GM10248 (cell line): ENCODE measurements at regions of chr1 and their contacts with region 1.

Region 1: DNA sequence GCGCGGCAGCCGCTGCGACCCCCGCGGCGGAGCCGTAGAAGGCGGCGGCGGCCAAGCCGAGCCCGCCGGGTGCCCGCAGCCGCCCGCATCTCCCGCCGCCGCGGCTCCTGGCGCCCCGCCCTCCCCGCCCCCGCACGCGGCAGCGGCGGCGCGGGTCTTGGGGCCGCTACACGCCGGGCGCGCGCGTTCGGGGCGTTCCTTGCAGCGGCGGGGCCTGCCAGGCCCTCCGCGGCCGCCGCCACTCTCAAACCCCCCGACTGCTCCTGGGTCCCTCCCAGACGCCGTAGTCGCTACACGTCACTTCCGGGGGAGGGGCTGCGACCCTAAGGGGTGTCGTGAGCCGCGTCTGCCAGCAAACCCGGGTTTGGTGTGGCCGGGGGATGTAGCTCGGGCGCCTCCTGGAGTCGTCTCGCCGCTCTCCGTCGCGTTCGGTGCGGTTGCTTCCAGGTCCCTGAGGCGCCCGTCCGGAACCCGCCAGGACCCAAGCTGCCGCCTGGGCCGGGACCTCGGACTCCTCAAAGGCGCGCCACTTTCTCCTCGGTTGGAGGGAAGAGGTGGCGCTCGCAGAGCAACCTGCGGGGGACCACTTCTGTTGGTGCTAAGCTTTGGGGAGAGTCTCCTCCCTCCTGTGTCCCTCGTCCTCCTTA is at the start of gene ELK4:
- DNase-seq: peak; percentile 97
- CTCF ChIP-seq: peak; percentile 79

Region 2: DNA sequence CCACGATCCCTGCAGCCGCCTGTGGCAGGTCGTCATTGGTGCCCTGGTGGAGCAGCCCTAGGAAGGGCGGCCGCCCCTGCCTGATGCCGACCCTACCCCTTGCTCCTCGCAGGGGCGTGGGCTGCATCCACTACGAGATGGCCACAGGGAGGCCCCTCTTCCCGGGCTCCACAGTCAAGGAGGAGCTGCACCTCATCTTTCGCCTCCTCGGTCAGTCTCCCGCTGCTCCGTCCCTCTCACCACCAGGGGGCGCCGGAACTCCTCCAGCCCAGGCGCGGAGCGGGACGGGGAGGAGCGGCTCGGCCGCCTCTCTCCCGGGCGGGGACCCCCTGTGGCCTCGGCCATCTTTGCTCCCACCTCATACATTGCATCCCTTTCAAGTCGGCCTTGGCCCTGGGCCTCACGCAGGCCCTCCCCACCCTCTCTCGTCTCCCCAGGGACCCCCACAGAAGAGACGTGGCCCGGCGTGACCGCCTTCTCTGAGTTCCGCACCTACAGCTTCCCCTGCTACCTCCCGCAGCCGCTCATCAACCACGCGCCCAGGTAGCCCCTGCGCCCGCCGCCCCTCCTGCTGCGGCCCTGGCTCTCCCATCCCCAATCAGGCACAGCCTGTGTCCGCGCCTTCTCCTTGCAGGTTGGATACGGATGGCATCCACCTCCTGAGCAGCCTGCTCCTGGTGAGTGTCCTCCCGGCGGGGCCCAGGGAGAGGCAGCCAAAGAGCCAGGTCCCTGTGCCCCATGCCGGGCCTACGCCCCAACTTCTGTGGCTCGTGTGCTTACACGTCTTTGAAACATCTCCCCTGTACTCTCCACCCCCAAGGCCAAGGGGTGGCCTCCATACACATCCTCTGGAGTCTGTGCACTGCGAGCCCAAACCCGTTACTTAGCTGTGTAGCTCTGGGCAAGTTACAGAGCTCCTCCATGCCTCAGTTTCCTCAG is 102.7 kb before region 1 on chr1:
- CTCF ChIA-PET with region 1: interaction called, 19 read pairs
- POLR2A ChIA-PET with region 1: no interaction called
- DNase-seq: peak; percentile 90
- CTCF ChIP-seq: peak; percentile 97

Region 3: DNA sequence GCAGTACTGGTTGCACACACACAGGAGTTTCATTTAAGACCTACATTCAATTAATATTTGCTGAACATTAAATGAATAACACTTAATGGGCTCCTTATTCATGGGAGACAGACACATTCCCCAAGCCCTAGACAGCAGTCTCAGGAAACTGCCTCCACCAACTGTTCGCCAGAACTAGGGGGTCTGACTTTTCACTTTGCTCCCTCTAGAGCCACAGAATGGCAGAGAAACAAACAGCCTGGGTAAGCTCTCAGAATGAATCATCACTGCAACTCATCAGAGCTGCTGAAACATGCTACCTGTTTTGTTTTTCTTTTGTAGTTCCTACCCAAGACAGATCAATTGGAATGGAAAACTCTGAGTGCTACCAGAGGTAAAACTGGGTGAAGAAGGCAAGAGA is 31.8 kb before region 1 on chr1:
- CTCF ChIA-PET with region 1: interaction called, 263 read pairs
- POLR2A ChIA-PET with region 1: interaction called, 4 read pairs
- DNase-seq: peak; percentile 55
- CTCF ChIP-seq: no peak

Region 4: DNA sequence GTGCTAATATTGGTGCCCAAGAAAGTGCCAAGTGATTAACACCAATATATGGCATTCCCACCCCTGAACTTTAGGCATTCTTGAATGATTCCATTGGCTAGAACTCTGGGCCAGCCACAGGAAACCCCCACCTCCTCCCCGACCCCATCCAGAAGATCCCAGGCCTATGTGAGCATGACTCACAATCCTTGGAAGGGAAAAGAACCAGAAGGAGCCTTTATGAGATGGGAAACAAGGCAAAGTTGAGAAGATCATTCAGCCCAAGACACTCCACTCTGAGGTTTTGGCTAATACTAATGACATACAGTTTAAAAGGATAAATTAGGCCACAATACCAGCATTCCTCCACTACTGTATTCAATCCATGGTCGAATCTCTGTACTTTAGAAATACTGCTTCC is 21.8 kb before region 1 on chr1:
- CTCF ChIA-PET with region 1: interaction called, 11 read pairs
- POLR2A ChIA-PET with region 1: no interaction called
- DNase-seq: no peak
- CTCF ChIP-seq: no peak

Region 5: GRCh38 chr1:205616563-205617293 is 15.1 kb before region 1 on chr1:
- CTCF ChIA-PET with region 1: interaction called, 12 read pairs
- POLR2A ChIA-PET with region 1: interaction called, 3 read pairs
- DNase-seq: peak; percentile 36
- CTCF ChIP-seq: no peak

Region 6: GRCh38 chr1:205645519-205645918 is 13.7 kb after region 1 on chr1:
- CTCF ChIA-PET with region 1: interaction called, 27 read pairs
- POLR2A ChIA-PET with region 1: interaction called, 6 read pairs
- DNase-seq: no peak
- CTCF ChIP-seq: no peak